Heart left ventricle (tissue), 16 donors: ENCODE measurements at regions of chr1 and their contacts with region 1.

Region 1: GRCh38 chr1:181021811-181022434 is 747 bp downstream of the STX6 start:
- DNase-seq: peak; percentile 72 to 79 (median 75)
- ATAC-seq: peak; percentile 23 to 70 (median 62)
- H3K4me3 ChIP-seq: peak overlapping the region; percentile 50 to 97 (median 76)
- H3K27ac ChIP-seq: peak overlapping the region; percentile 65 to 94 (median 86)
- H3K4me1 ChIP-seq: peaks cover 0 to 42% (median 17%) of the 10 kb centered on the region in 12 donors
- H3K27me3 ChIP-seq: peaks cover 0 to 4% (median 0%) of the 10 kb centered on the region in 9 donors
- CTCF ChIP-seq: no peak
- POLR2A ChIP-seq: no peak

Region 2: GRCh38 chr1:180502360-180503273 is 519.3 kb before region 1 on chr1 and contains the start of gene ACBD6:
- intact Hi-C with region 1: loop called in 1 of 10 experiments (anchors 10 kb)
- DNase-seq: peak; percentile 82 to 91 (median 84)
- ATAC-seq: peak; percentile 87 to 96 (median 94)
- H3K4me3 ChIP-seq: peak within 1 kb of the TSS; percentile 75 to 95 (median 90)
- H3K27ac ChIP-seq: peak within 1 kb of the TSS; percentile 84 to 95 (median 92)
- H3K4me1 ChIP-seq: peaks cover 0 to 32% (median 15%) of the 10 kb centered on the region in 12 donors
- H3K27me3 ChIP-seq: no peaks in the 10 kb centered on the region
- CTCF ChIP-seq: peak in 4 of 12 donors; percentile 20 to 28 (median 24)
- POLR2A ChIP-seq: peak in 1 of 2 donors; percentile 53
- total RNA-seq, gene ACBD6: 18.6 to 24.6 (median 21.5) TPM

Region 3: DNA sequence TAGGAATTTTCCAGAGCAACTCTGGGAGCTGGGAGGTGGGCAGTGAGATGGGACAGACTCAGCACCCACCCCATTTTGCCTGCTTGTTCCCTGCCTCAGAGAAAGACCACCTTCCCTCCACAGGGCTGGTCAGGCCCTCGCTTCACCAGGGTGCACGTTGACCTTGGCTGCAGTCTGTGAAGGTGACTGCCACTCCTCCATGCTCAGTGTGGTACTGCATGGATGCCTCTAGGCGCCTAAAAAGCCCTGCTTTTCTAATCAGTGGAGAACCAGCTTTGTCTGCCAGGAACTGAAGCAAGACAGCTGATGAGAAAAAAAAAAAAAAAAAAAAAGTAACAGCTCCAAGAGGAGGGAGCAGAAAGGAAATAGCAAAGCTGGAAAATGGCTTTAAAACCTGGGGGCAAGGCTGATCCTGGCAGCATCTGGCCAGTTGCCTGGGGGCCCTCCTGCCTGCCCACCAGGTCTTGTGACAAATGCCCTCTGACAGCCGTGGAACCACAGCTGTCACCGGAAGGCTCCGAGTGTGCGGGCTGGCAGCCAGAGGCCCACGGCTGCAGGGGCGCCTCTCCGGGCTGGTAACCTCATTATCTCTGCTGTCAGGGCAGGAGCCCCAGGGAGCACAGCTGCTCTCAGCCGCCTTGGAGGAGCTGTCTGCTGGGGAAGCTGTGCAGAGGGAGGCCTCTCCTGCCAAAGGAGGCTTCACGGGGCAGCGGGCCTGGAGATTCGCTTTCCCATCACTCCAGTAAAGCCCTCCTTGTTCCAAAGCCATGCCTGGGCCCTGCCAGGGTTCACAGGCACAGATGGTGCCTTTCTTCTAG is 95.5 kb before region 1 on chr1:
- intact Hi-C with region 1: loop called in 2 of 10 experiments (anchors 5 to 10 kb)
- DNase-seq: peak; percentile 71 to 88 (median 76)
- ATAC-seq: peak; percentile 48 to 75 (median 66)
- H3K4me3 ChIP-seq: peak overlapping the region in 4 of 12 donors; percentile 3 to 31 (median 6)
- H3K27ac ChIP-seq: peak overlapping the region; percentile 7 to 90 (median 82)
- H3K4me1 ChIP-seq: peaks cover 11 to 48% (median 33%) of the 10 kb centered on the region in 12 donors
- H3K27me3 ChIP-seq: no peaks in the 10 kb centered on the region
- CTCF ChIP-seq: no peak
- POLR2A ChIP-seq: no peak

Region 4: GRCh38 chr1:180975551-180975950 is 46.4 kb before region 1 on chr1:
- intact Hi-C with region 1: no loop called
- DNase-seq: no peak
- ATAC-seq: no peak
- H3K4me3 ChIP-seq: no peak overlapping the region
- H3K27ac ChIP-seq: no peak overlapping the region
- H3K4me1 ChIP-seq: peaks cover 0 to 13% (median 3%) of the 10 kb centered on the region in 12 donors
- H3K27me3 ChIP-seq: no peaks in the 10 kb centered on the region
- CTCF ChIP-seq: no peak
- POLR2A ChIP-seq: no peak